Esophagus muscularis mucosa (tissue), 4 donors: ENCODE measurements at regions of chr3 and their contacts with region 1.

Region 1: GRCh38 chr3:71064288-71064955 is 519.1 kb downstream of the FOXP1 start:
- DNase-seq: no peak
- H3K4me3 ChIP-seq: peak overlapping the region; percentile 68 to 75 (median 72)
- H3K27ac ChIP-seq: peak overlapping the region; percentile 92 to 98 (median 98)
- H3K4me1 ChIP-seq: peaks cover 40 to 63% (median 56%) of the 10 kb centered on the region in 4 donors
- H3K27me3 ChIP-seq: no peaks in the 10 kb centered on the region
- CTCF ChIP-seq: peak in 2 of 3 experiments; percentile 14 to 25
- EP300 ChIP-seq: no peak
- POLR2A ChIP-seq: no peak

Region 2: GRCh38 chr3:70963431-70964275 is 100.8 kb before region 1 on chr3:
- intact Hi-C with region 1: no loop called
- DNase-seq: no peak
- H3K4me3 ChIP-seq: no peak overlapping the region
- H3K27ac ChIP-seq: peak overlapping the region; percentile 18 to 61 (median 35)
- H3K4me1 ChIP-seq: peaks cover 12 to 54% (median 47%) of the 10 kb centered on the region in 4 donors
- H3K27me3 ChIP-seq: no peaks in the 10 kb centered on the region
- CTCF ChIP-seq: no peak
- EP300 ChIP-seq: no peak
- POLR2A ChIP-seq: no peak

Region 3: DNA sequence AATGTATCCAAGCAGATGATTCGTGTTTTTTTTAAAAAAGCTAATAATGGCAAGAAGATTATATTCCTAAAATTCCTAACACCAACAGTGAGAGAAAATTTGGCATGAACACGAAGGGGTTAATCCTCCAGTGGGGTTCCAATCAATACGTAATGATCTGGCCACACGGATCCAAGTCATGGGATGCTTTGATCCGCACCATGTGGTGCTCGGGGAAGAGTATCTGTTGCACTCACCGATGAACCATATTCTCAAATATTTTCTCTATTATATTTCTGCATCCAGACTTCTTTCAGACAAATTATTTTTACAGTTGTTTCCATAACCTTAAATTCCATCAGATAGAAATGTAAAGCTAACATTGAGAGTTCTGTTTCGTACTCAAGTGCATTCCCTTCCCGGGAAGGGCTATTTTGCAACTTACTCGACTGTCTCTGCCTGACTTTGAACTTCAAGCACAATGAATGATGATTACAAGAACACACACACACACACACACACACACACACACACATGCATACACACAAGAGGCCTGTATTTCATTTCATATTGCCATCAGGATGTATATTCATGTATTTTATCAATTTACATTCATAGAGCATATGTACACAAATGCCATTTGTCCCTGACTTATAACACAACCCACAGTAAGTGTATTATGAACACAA is 48.1 kb before region 1 on chr3:
- intact Hi-C with region 1: loop called (anchors 5 kb)
- DNase-seq: peak; percentile 62
- H3K4me3 ChIP-seq: peak overlapping the region in 1 of 4 donors; percentile 5
- H3K27ac ChIP-seq: peak overlapping the region; percentile 36 to 77 (median 66)
- H3K4me1 ChIP-seq: peaks cover 3 to 81% (median 79%) of the 10 kb centered on the region in 4 donors
- H3K27me3 ChIP-seq: no peaks in the 10 kb centered on the region
- CTCF ChIP-seq: no peak
- EP300 ChIP-seq: no peak
- POLR2A ChIP-seq: no peak

Region 4: DNA sequence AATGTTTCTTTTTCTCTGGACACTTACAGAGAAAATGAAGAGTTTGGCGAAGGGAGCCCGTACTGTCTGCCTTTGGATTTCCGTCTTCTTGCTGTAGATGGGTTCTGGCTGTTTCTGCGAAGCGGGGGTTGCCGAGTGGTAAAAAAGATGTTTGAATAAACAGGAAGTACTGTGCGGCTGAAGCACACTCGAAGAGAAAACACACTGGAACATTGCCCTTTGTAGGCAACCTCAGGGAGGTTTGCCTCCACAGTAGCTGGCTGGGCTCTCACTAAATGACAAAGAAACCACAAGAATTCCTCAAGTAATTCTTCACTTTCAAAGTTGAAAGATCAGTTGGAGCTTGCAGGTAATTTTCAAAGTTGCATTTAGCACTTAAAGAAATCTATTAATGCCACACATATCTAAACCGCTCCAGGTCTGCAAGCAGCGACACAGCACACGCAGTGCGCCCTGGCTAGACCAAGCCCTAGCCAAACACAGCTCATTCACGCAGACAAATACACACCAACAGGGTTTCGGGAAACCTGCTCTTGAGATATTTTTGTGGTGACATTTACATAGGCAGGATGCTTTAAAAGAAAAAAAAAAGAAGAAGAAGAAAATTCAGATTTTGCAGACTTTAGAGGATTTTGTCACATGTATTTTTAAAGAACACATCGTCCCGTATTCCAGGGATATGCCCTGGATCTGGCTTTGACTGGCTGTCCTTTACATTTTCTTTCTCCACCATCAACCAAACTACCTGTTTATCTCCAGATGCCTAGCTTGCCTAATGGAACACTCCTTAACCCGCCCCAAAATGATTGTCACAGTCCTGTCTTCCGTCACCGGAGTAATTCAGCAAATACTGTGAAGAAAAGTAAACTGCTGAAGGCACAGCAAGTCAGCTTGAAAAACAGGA is 66.3 kb after region 1 on chr3:
- intact Hi-C with region 1: loop called (anchors 2 kb)
- DNase-seq: peak; percentile 94
- H3K4me3 ChIP-seq: peak overlapping the region; percentile 44 to 60 (median 57)
- H3K27ac ChIP-seq: peak overlapping the region; percentile 80 to 91 (median 82)
- H3K4me1 ChIP-seq: peaks cover 55 to 78% (median 74%) of the 10 kb centered on the region in 4 donors
- H3K27me3 ChIP-seq: no peaks in the 10 kb centered on the region
- CTCF ChIP-seq: no peak
- EP300 ChIP-seq: no peak
- POLR2A ChIP-seq: no peak

Region 5: GRCh38 chr3:71210257-71211007 is 146.0 kb after region 1 on chr3:
- intact Hi-C with region 1: loop called (anchors 10 kb)
- DNase-seq: no peak
- H3K4me3 ChIP-seq: peak overlapping the region in 2 of 4 donors; percentile 3 to 4
- H3K27ac ChIP-seq: peak overlapping the region; percentile 81 to 89 (median 86)
- H3K4me1 ChIP-seq: peaks cover 31 to 69% (median 56%) of the 10 kb centered on the region in 4 donors
- H3K27me3 ChIP-seq: no peaks in the 10 kb centered on the region
- CTCF ChIP-seq: peak in 1 of 3 experiments; percentile 53
- EP300 ChIP-seq: peak; percentile 81
- POLR2A ChIP-seq: no peak